ENCODE measurements at regions of chr10 and their contacts with region 1.

Region 1: DNA sequence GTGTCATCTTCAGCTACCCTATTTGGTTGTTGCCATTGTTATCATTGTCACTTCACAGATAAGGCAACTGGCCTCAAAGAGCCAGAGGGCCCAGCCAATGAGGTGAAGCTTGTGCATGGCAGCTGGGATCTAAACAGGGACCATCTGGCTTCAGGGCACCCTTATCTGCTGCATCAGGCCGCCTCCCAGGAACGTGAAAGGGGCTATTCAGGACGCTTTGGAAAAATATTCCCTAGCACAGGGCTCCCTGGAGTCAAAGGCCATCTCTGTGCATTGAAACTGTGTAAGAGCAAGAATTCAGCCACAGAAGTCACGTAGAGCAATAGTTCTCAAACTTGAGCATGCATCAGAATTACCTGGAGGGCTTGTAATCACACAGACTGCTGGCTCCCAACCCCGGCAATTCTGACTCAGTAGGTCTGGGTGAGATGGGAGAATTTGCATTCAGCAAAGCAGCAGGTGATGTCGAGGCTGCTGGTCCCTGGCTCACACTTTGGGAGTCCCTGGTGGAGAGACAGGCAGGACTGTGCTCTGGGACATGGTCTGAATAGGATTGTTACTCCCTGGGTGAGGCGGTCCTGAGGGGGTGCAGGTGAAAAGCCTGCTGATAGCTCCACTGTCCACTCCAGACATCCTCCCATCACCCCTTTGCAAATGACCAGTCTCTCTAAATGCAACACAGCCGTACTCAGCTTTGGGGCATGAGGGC is 21.5 kb upstream of the PLEKHA1 start:
- DNase-seq: peak; percentile 25
- H3K4me3 ChIP-seq: no peak overlapping the region
- H3K27ac ChIP-seq: no peak overlapping the region
- H3K4me1 ChIP-seq: no peaks in the 10 kb centered on the region; a peak in 1 of 4 replicates
- H3K27me3 ChIP-seq: no peaks in the 10 kb centered on the region
- CTCF ChIP-seq: no peak
- EP300 ChIP-seq: no peak
- RAD21 ChIP-seq: no peak

Region 2: GRCh38 chr10:122323941-122324675 is 28.9 kb before region 1 on chr10:
- CTCF ChIA-PET with region 1: no interaction called
- POLR2A ChIA-PET with region 1: no interaction called
- DNase-seq: no peak
- H3K4me3 ChIP-seq: no peak overlapping the region
- H3K27ac ChIP-seq: no peak overlapping the region
- H3K4me1 ChIP-seq: no peaks in the 10 kb centered on the region
- H3K27me3 ChIP-seq: no peaks in the 10 kb centered on the region
- CTCF ChIP-seq: no peak
- EP300 ChIP-seq: no peak
- RAD21 ChIP-seq: no peak

Region 3: DNA sequence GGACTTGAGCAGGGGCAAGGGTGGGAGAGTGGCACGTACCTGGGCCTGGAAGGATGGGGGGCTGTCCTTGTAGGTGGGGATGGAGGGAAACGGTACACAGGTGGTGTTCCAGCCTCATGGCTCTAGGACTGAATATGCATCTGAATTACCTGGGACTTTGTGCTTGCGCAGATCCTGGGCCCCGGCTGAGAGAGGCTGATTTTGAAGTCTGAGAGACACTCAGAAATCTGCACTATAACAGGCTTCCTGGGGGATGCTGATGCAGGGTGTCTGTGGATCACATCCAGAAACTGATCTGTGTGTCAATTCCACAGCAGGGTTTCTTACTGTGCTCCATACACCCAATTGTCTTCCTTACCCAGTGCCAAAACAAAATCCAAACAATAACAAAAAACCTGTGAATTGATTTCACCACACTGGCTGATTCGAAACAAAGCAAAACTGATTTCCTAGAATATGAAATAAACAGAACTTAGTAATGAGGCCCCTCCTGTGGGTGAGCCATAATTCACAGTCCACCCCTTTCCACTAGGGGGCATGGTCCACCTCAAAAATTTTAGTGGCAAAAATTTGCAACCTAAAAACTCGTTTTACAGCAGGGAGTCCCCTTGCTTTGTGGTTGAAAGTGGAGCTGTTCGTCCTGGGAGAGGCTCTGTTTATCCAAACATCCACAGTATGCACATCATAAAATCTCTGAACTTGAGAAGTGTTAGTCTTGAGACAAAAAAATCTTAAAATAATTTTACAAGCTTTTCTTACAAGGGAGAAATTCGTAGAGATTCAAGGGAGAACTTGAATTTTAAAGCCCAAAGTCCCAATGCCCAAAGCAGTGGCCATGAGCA is 10.5 kb before region 1 on chr10:
- CTCF ChIA-PET with region 1: interaction called, 12 read pairs
- POLR2A ChIA-PET with region 1: no interaction called
- DNase-seq: peak; percentile 63
- H3K4me3 ChIP-seq: no peak overlapping the region
- H3K27ac ChIP-seq: no peak overlapping the region
- H3K4me1 ChIP-seq: no peaks in the 10 kb centered on the region
- H3K27me3 ChIP-seq: no peaks in the 10 kb centered on the region
- CTCF ChIP-seq: peak; percentile 76
- EP300 ChIP-seq: no peak
- RAD21 ChIP-seq: peak; percentile 80